Left lung (tissue), 14 donors: ENCODE measurements at regions of chr16 and their contacts with region 1.

Region 1: GRCh38 chr16:84484579-84485254 is 19.7 kb downstream of the MEAK7 start:
- DNase-seq: peak in 2 of 4 donors; percentile 49 to 71
- ATAC-seq: peak; percentile 88
- H3K4me3 ChIP-seq: no peak overlapping the region
- H3K27ac ChIP-seq: no peak overlapping the region
- H3K4me1 ChIP-seq: no peaks in the 10 kb centered on the region
- H3K27me3 ChIP-seq: no peaks in the 10 kb centered on the region
- CTCF ChIP-seq: peak; percentile 59 to 62

Region 2: DNA sequence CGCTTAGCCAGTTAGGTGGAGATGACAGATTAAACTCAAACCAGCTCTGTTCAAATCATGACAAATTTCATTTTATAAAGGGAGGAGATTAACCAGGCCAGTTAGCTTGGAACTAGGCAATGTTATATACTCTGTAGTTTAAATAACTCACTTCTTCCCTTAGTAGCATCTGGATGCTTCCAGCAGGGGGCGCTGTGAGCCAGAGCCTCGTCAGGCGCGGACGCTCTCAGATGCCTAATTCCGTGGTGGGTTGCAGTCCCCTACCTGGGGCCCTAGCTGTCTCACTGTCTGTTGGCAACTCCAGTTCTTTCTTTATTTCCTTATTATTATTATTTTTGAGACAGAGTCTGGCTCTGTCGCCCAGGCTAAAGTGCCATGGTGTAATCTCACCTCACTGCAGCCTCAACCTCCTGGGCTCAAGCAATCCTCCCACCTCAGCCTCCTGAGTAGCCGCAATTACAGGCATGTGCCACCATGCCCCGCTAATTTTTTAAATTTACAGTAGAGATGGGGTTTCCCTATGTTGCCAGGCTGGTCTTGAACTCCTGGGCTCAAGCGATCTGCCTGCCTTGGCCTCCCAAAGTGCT is 207.4 kb before region 1 on chr16:
- intact Hi-C with region 1: loop called in 1 of 2 experiments (anchors 10 kb)
- DNase-seq: peak in 3 of 4 donors; percentile 61 to 90 (median 66)
- ATAC-seq: peak; percentile 93
- H3K4me3 ChIP-seq: no peak overlapping the region
- H3K27ac ChIP-seq: no peak overlapping the region
- H3K4me1 ChIP-seq: peaks cover 0 to 4% of the 10 kb centered on the region in 2 donors
- H3K27me3 ChIP-seq: no peaks in the 10 kb centered on the region
- CTCF ChIP-seq: peak; percentile 79 to 84

Region 3: GRCh38 chr16:84532291-84532724 is 47.6 kb after region 1 on chr16:
- intact Hi-C with region 1: no loop called
- DNase-seq: peak in 3 of 4 donors; percentile 46 to 59 (median 55)
- ATAC-seq: peak; percentile 78
- H3K4me3 ChIP-seq: no peak overlapping the region
- H3K27ac ChIP-seq: peak overlapping the region; percentile 28 to 74
- H3K4me1 ChIP-seq: peaks cover 13 to 36% of the 10 kb centered on the region in 2 donors
- H3K27me3 ChIP-seq: no peaks in the 10 kb centered on the region
- CTCF ChIP-seq: no peak